MCF 10A (cell line): ENCODE measurements at regions of chr2 and their contacts with region 1.

Region 1: DNA sequence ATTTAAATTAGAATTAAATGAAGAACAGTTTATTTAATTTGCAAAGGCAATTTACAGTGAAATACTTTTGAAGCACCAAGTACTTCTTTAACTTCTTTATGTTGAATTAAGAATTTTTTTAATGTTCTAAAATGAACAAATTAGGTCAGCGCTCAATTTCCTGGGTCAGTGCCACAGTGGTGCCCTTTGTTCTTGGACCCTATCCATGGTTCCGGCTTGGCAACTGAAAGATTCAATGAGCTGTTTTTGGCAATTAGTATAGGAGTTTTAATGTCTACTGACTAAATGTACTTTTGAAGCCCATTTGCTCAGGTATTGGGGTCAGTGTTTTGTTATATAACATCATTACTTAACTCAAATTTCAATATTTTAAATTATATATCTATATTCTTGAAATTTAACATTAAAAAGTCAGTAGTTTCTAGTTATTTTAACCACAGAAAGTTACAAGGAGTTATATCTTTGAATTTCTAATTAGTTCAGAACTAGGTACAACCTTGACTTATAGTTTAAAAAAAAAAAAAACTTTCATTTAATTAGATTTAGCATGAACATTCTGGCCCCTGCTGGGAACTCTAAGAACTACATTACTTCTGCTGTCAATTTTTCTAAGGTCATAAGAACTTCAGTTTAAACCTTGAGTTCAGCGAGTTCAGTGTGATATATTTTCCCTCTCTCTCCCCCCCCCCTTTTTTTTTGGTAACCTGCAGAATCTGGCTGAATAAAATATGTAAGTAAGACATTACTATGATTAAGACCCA is 7.6 kb upstream of the MSTN start:
- DNase-seq: peak; percentile 66
- H3K4me3 Mint-ChIP-seq: no peak overlapping the region
- H3K27ac Mint-ChIP-seq: no peak overlapping the region
- H3K4me1 Mint-ChIP-seq: no peaks in the 10 kb centered on the region
- H3K27me3 Mint-ChIP-seq: no peaks in the 10 kb centered on the region
- CTCF ChIP-seq: peak; percentile 60

Region 2: GRCh38 chr2:189751080-189751658 is 318.9 kb before region 1 on chr2:
- CTCF ChIA-PET with region 1: interaction called, 3 read pairs
- POLR2A ChIA-PET with region 1: interaction called, 3 read pairs
- intact Hi-C with region 1: loop called (anchors 1 kb)
- DNase-seq: peak; percentile 52
- H3K4me3 Mint-ChIP-seq: no peak overlapping the region
- H3K27ac Mint-ChIP-seq: no peak overlapping the region
- H3K4me1 Mint-ChIP-seq: no peaks in the 10 kb centered on the region
- H3K27me3 Mint-ChIP-seq: no peaks in the 10 kb centered on the region
- CTCF ChIP-seq: peak; percentile 61

Region 3: GRCh38 chr2:189798312-189799029 is 271.6 kb before region 1 on chr2:
- CTCF ChIA-PET with region 1: interaction called, 19 read pairs
- POLR2A ChIA-PET with region 1: interaction called, 4 read pairs
- intact Hi-C with region 1: loop called (anchors 1 kb)
- DNase-seq: peak; percentile 40
- H3K4me3 Mint-ChIP-seq: no peak overlapping the region
- H3K27ac Mint-ChIP-seq: peak overlapping the region; percentile 16
- H3K4me1 Mint-ChIP-seq: peaks cover 31% of the 10 kb centered on the region
- H3K27me3 Mint-ChIP-seq: no peaks in the 10 kb centered on the region
- CTCF ChIP-seq: peak; percentile 59

Region 4: GRCh38 chr2:190023861-190024260 is 46.3 kb before region 1 on chr2:
- CTCF ChIA-PET with region 1: interaction called, 52 read pairs
- POLR2A ChIA-PET with region 1: no interaction called
- intact Hi-C with region 1: loop called (anchors 1 kb)
- DNase-seq: peak; percentile 75
- H3K4me3 Mint-ChIP-seq: no peak overlapping the region
- H3K27ac Mint-ChIP-seq: no peak overlapping the region
- H3K4me1 Mint-ChIP-seq: no peaks in the 10 kb centered on the region
- H3K27me3 Mint-ChIP-seq: no peaks in the 10 kb centered on the region
- CTCF ChIP-seq: peak; percentile 33

Region 5: GRCh38 chr2:190029546-190029945 is 40.6 kb before region 1 on chr2:
- CTCF ChIA-PET with region 1: interaction called, 52 read pairs
- POLR2A ChIA-PET with region 1: no interaction called
- intact Hi-C with region 1: loop called (anchors 1 kb)
- DNase-seq: no peak
- H3K4me3 Mint-ChIP-seq: no peak overlapping the region
- H3K27ac Mint-ChIP-seq: no peak overlapping the region
- H3K4me1 Mint-ChIP-seq: no peaks in the 10 kb centered on the region
- H3K27me3 Mint-ChIP-seq: no peaks in the 10 kb centered on the region
- CTCF ChIP-seq: no peak